Ovary (tissue), 10 donors: ENCODE measurements at regions of chr19 and their contacts with region 1.

Region 1: DNA sequence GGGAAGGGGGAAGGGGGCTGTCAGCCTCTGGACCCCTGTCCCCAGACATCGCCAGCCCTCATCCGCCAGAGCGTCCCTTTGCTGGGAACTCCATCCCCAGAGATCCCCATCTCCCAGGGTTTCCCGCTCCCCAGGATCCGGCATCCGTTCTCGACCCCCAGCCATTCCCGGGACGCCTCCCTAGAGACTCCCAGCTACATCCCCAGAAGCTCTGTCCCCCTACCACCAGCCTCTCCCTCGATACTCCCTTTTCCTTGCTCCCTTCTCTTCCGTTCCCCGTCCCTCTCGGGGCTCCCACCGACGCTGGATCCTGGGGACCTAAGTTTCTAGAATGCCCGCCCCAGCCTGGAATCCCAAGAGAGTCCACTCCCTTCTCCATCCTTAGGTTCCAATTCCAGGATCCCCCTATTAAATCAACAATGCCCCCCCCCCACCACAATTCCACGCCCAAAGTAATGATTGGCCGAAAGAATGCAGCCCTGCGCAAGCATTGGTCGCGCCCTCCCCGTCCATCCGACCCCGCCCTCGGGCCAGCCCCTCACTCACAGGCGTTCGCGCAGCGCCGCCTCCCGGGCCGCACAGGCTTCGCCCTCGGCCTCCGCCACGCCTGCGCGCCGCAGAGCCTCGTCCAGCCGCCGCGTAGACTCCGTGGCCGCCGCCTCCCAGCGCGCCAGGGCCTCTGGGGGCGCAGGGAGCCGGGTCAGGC is 3.2 kb downstream of the CCDC194 start:
- DNase-seq: peak; percentile 91 to 95 (median 93)
- H3K4me3 ChIP-seq: peak overlapping the region; percentile 54
- H3K27ac ChIP-seq: no peak overlapping the region
- H3K4me1 ChIP-seq: peaks cover 11% of the 10 kb centered on the region
- H3K27me3 ChIP-seq: no peaks in the 10 kb centered on the region
- CTCF ChIP-seq: peak; percentile 82 to 94 (median 87)
- EP300 ChIP-seq: no peak
- POLR2A ChIP-seq: peak; percentile 16

Region 2: GRCh38 chr19:17058236-17058635 is 332.6 kb before region 1 on chr19:
- intact Hi-C with region 1: no loop called
- DNase-seq: no peak
- H3K4me3 ChIP-seq: no peak overlapping the region
- H3K27ac ChIP-seq: no peak overlapping the region
- H3K4me1 ChIP-seq: no peaks in the 10 kb centered on the region
- H3K27me3 ChIP-seq: no peaks in the 10 kb centered on the region
- CTCF ChIP-seq: no peak
- EP300 ChIP-seq: no peak
- POLR2A ChIP-seq: no peak

Region 3: GRCh38 chr19:17292286-17293097 is 98.3 kb before region 1 on chr19:
- intact Hi-C with region 1: loop called in 1 of 4 experiments (anchors 2 kb)
- DNase-seq: peak; percentile 60 to 89 (median 80)
- H3K4me3 ChIP-seq: peak overlapping the region; percentile 45
- H3K27ac ChIP-seq: peak overlapping the region in 1 of 2 donors; percentile 74
- H3K4me1 ChIP-seq: peaks cover 2% of the 10 kb centered on the region
- H3K27me3 ChIP-seq: no peaks in the 10 kb centered on the region
- CTCF ChIP-seq: peak in 2 of 3 donors; percentile 42 to 53
- EP300 ChIP-seq: no peak
- POLR2A ChIP-seq: no peak

Region 4: DNA sequence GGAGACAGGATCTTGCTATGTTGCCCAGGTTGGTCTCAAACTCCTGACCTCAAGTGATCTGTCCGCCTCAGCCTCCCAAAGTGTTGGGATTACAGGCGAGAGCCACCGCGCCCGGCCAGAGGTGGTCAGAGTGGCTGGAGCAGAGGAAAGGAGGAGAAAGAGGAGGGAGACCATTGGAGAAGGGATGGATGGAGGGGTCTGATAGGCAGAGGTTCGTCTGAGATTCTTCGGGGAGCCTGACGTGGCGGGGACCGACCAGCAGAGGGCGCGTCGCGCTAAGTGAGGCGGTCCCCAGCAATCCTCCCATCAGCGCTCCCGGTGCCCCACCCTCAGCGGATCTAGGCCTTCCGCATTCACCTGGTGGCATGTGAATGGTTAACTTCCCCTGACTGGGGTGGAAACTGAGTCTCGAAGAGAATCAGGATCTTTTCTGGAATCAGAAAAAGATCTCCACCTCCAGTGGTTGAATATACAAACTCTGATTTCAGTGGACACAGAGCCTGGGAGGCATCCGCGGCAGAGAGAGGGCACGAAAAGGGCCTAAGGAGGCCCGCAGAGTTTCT is 44.6 kb before region 1 on chr19:
- intact Hi-C with region 1: loop called (anchors 2 to 5 kb)
- DNase-seq: peak; percentile 63 to 87 (median 83)
- H3K4me3 ChIP-seq: no peak overlapping the region
- H3K27ac ChIP-seq: no peak overlapping the region
- H3K4me1 ChIP-seq: no peaks in the 10 kb centered on the region
- H3K27me3 ChIP-seq: no peaks in the 10 kb centered on the region
- CTCF ChIP-seq: peak; percentile 93 to 96 (median 95)
- EP300 ChIP-seq: no peak
- POLR2A ChIP-seq: no peak